ENCODE measurements at regions of chr1 and their contacts with region 1.

Region 1: DNA sequence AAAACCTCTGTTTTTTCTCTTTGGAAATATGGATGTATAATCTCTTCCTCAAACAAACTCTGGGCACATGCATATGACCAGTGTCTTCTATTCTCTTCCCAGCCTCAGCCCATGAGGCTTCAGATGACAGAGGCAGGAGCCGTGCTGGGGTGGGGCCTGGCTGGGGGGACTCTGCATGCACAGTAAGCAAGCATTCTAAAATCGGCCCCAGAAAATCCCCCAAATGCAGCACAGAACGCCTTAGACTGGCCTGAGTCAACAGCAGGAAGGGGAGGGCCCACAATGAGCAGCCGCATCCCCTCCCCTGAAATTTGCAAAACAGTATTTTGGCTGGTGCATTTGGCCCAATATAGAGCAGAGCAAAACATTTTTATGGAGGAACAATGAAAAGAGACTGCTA is 47.8 kb downstream of the ITPKB start:
- DNase-seq: no peak
- H3K4me3 ChIP-seq: no peak overlapping the region
- H3K27ac ChIP-seq: peak overlapping the region in 1 of 4 donors; percentile 71
- H3K4me1 ChIP-seq: peaks cover 0 to 98% (median 94%) of the 10 kb centered on the region in 4 donors
- H3K27me3 ChIP-seq: no peaks in the 10 kb centered on the region
- CTCF ChIP-seq: no peak
- EP300 ChIP-seq: no peak
- POLR2A ChIP-seq: no peak

Region 2: DNA sequence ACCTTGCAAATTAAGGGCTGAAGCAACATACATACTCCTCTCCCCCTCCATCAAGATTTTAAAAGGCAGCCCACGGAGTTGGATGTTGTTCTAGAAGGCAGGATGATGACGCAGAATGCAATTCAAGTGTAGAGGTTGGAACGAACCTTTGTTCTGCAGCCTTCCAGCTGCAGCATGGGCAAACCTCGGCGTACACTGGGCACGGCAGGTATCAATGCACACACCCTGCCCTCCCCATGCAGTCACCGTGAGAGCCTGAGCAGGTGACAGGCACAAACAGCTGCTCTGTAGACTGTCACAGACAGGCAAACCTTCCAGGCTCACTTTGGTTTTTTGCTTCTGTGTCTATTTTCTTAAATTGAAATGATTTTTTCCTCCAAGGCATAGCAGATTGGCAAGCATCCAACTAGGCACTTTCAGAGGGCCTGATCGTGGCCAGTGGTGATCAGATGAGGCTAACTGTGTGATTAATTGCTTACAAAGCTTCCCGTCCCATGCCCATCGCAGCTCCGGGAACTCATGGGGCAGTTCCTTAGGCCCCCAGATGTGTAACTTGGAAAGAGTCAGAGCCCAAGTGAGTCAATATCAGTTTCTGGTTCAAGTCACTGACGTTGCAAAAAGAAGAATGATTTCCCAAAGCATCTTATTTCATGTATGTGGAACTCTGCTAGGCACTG is 34.5 kb before region 1 on chr1:
- intact Hi-C with region 1: loop called (anchors 5 kb)
- DNase-seq: no peak
- H3K4me3 ChIP-seq: no peak overlapping the region
- H3K27ac ChIP-seq: no peak overlapping the region
- H3K4me1 ChIP-seq: no peaks in the 10 kb centered on the region
- H3K27me3 ChIP-seq: no peaks in the 10 kb centered on the region
- CTCF ChIP-seq: no peak
- EP300 ChIP-seq: peak in 2 of 4 donors; percentile 20 to 73
- POLR2A ChIP-seq: no peak